Panc1 (cell line): ENCODE measurements at regions of chr10 and their contacts with region 1.

Region 1: GRCh38 chr10:99430451-99431189 is at the start of gene GOT1:
- DNase-seq: peak; percentile 99
- ATAC-seq: peak; percentile 98
- H3K4me3 ChIP-seq: peak within 1 kb of the TSS; percentile 90 to 98
- H3K27ac ChIP-seq: peak within 1 kb of the TSS; percentile 94
- H3K4me1 ChIP-seq: peaks cover 17% of the 10 kb centered on the region
- H3K27me3 ChIP-seq: no peaks in the 10 kb centered on the region
- CTCF ChIP-seq: no peak
- total RNA-seq, gene GOT1: 51.6 TPM

Region 2: DNA sequence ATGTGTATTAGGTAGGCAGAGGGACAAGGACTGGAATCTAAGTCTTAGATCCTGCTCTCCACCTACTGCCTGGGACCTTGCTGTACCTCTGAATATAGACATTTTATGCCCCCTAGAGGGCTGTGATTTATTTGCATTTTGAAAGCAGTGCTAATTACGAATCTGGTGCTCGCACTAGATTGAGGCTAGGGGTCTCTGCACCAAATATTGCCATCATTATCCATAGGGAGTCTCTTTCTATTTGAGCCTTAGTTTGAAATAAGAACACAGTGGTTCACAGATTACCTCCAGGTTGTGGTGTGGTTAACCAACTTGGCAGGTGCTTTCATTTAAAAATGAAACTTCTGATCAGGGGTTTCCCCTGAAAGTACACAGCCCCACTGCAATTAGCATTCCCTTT is 59.6 kb before region 1 on chr10:
- CTCF ChIA-PET with region 1: no interaction called
- POLR2A ChIA-PET with region 1: no interaction called
- in situ Hi-C with region 1: no loop called
- intact Hi-C with region 1: no loop called
- DNase-seq: no peak
- ATAC-seq: peak; percentile 77
- H3K4me3 ChIP-seq: no peak overlapping the region
- H3K27ac ChIP-seq: no peak overlapping the region
- H3K4me1 ChIP-seq: no peaks in the 10 kb centered on the region; the same call in 1 of the 2 replicates
- H3K27me3 ChIP-seq: no peaks in the 10 kb centered on the region
- CTCF ChIP-seq: peak; percentile 64

Region 3: DNA sequence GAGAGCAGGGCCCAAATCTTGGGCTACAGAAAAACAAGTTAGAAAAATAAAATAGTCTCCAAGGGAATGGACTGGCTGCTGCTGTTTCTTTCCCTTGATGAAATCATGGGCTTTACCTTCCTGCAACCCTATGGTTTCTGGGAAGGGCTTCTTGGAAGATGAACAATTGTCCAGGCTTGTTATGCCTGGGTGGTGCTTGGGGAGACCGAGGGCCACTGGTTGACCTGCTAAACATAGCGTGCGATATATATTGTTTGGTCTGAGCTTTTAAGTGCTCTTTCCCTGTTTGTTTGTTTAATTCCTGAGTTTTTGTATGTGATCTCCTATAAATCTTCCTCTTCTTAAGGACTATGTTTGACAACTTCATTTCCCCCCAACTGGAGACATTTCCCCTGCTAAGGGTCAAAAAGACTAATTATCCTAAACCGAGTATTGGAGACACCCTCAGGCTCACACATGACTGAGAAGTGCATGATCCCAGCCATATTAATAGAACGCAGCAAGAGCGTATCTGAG is 151.7 kb after region 1 on chr10:
- CTCF ChIA-PET with region 1: no interaction called
- POLR2A ChIA-PET with region 1: interaction called, 11 read pairs
- in situ Hi-C with region 1: no loop called
- intact Hi-C with region 1: no loop called
- DNase-seq: no peak
- ATAC-seq: no peak
- H3K4me3 ChIP-seq: no peak overlapping the region
- H3K27ac ChIP-seq: no peak overlapping the region
- H3K4me1 ChIP-seq: no peaks in the 10 kb centered on the region
- H3K27me3 ChIP-seq: no peaks in the 10 kb centered on the region
- CTCF ChIP-seq: no peak